ENCODE measurements at regions of chr20 and their contacts with region 1.

Region 1: GRCh38 chr20:2172305-2173175 is 70.9 kb downstream of the STK35 start:
- DNase-seq: peak; percentile 77
- CTCF ChIP-seq: peak; percentile 78

Region 2: GRCh38 chr20:1764136-1765033 is 408.2 kb before region 1 on chr20:
- CTCF ChIA-PET with region 1: interaction called, 16 read pairs
- POLR2A ChIA-PET with region 1: no interaction called
- DNase-seq: peak; percentile 63
- CTCF ChIP-seq: peak; percentile 86

Region 3: DNA sequence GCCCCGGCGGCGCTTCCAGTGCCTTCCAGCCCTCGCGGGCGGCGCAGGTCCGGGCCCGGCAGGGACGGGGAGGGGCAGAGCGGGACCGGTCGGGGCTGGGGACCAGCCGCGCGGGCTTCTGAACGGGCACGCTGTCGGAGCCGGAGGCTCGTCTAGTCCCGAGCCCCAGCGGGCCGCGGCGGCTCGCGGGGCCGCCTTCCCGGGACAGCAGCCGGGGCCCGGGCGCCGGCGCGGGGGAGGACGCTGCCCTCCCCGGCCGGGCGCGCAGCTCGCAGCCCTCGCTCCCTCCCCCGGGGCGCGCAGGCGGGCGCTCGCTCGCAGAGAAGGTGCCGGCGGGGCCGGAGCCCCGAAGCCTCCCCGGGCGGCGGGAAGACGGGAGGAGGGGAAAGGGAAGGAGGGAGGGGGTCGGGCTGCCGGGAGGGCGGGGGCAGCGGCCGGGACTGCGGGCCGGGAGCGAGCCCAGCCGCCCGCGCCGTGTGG is 278.0 kb before region 1 on chr20:
- CTCF ChIA-PET with region 1: no interaction called
- POLR2A ChIA-PET with region 1: no interaction called
- DNase-seq: peak; percentile 54
- CTCF ChIP-seq: no peak

Region 4: GRCh38 chr20:2005831-2006426 is 166.6 kb before region 1 on chr20:
- CTCF ChIA-PET with region 1: interaction called, 56 read pairs
- POLR2A ChIA-PET with region 1: no interaction called
- DNase-seq: peak; percentile 61
- CTCF ChIP-seq: no peak

Region 5: DNA sequence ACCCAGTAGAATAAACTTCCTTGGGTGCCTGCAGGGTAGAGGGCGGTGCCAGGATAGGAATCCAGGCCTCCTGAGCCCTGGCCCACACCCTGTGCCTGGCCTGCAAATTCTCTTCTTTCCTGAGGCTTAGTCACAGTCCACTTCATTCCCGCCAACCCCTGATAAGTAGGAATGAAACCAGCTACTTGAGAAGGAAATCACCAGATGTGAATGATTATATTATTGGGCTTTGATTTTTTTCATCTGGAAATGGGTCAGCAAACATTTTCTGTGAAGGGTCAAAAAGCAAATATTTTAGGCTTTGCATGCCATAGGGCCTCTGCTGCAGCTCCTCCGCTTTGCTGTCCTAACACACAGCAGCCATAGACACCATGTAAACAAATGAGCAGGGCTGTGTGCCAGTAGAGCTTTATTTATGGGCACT is 20.7 kb before region 1 on chr20:
- CTCF ChIA-PET with region 1: interaction called, 16 read pairs
- POLR2A ChIA-PET with region 1: no interaction called
- DNase-seq: no peak
- CTCF ChIP-seq: no peak

Region 6: DNA sequence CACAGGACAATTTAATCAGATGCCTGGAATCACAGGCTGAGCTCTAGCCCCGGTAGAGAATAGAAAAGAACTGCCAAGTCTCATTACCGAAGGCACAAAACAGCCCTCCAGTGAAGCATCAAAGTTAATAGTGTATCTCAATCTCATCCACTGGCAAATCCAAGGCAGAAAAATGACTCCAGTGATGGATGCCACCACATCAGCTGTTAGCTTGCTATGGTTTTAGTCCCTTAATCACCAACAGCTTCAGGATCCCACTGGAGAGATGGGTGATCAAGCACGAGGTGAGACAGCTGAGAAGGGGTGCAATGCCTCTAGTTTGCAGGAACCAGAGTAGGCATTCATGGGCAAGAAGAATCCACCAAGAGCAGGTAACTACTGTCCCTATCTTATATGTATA is 10.8 kb after region 1 on chr20:
- CTCF ChIA-PET with region 1: interaction called, 41 read pairs
- POLR2A ChIA-PET with region 1: no interaction called
- DNase-seq: no peak
- CTCF ChIP-seq: no peak

Measured in GM10248 (cell line).